CD4-positive, alpha-beta memory T cell (primary cell): ENCODE measurements at regions of chr14 and their contacts with region 1.

Region 1: GRCh38 chr14:38089123-38089522 is 118.6 kb upstream of the SSTR1 start:
- DNase-seq: peak in 1 of 5 donors; percentile 13
- H3K4me3 ChIP-seq: peak overlapping the region; percentile 2 to 30
- H3K4me3 Mint-ChIP-seq: peak overlapping the region; percentile 73 to 90 (median 84)
- H3K27ac ChIP-seq: peak overlapping the region; percentile 41
- H3K27ac Mint-ChIP-seq: peak overlapping the region; percentile 73 to 92 (median 87)
- H3K4me1 ChIP-seq: peaks cover 29% of the 10 kb centered on the region
- H3K4me1 Mint-ChIP-seq: peaks cover 20 to 32% (median 21%) of the 10 kb centered on the region in 4 donors
- H3K27me3 ChIP-seq: no peaks in the 10 kb centered on the region
- H3K27me3 Mint-ChIP-seq: no peaks in the 10 kb centered on the region

Region 2: DNA sequence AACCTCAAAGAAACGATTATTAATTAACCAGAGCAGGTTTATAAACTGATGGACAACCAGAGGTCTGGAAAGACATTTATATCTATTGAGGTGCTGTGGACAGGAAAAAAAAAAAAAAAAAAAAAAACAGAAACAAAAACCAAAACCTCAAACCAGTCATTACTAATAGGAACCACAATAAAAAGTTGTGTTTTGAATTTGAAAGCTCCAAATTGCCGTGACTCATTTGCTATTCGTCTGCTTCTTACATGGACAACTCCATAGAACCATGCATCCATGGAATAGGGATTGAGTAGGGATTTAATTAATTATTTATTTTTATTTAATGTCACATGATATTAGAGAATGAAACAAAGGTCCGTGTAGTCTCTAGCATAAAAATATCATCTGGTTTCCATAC is 15.5 kb before region 1 on chr14:
- CTCF ChIA-PET with region 1: no interaction called
- POLR2A ChIA-PET with region 1: no interaction called
- intact Hi-C with region 1: loop called (anchors 2 kb)
- DNase-seq: peak in 4 of 5 donors; percentile 30 to 48 (median 34)
- H3K4me3 ChIP-seq: peak overlapping the region in 1 of 2 donors; percentile 35
- H3K4me3 Mint-ChIP-seq: peak overlapping the region in 6 of 8 donors; percentile 35 to 81 (median 73)
- H3K27ac ChIP-seq: no peak overlapping the region
- H3K27ac Mint-ChIP-seq: peak overlapping the region; percentile 89 to 95 (median 93)
- H3K4me1 ChIP-seq: peaks cover 86% of the 10 kb centered on the region
- H3K4me1 Mint-ChIP-seq: peaks cover 57 to 89% (median 70%) of the 10 kb centered on the region in 4 donors
- H3K27me3 ChIP-seq: no peaks in the 10 kb centered on the region
- H3K27me3 Mint-ChIP-seq: no peaks in the 10 kb centered on the region

Region 3: GRCh38 chr14:38121320-38122020 is 32.3 kb after region 1 on chr14:
- CTCF ChIA-PET with region 1: no interaction called
- POLR2A ChIA-PET with region 1: no interaction called
- intact Hi-C with region 1: loop called (anchors 5 kb)
- DNase-seq: no peak
- H3K4me3 ChIP-seq: no peak overlapping the region
- H3K4me3 Mint-ChIP-seq: peak overlapping the region in 6 of 8 donors; percentile 13 to 69 (median 32)
- H3K27ac ChIP-seq: no peak overlapping the region
- H3K27ac Mint-ChIP-seq: peak overlapping the region in 4 of 7 donors; percentile 39 to 59 (median 52)
- H3K4me1 ChIP-seq: peaks cover 10% of the 10 kb centered on the region
- H3K4me1 Mint-ChIP-seq: peaks cover 22 to 35% (median 30%) of the 10 kb centered on the region in 4 donors
- H3K27me3 ChIP-seq: no peaks in the 10 kb centered on the region
- H3K27me3 Mint-ChIP-seq: no peaks in the 10 kb centered on the region

Region 4: DNA sequence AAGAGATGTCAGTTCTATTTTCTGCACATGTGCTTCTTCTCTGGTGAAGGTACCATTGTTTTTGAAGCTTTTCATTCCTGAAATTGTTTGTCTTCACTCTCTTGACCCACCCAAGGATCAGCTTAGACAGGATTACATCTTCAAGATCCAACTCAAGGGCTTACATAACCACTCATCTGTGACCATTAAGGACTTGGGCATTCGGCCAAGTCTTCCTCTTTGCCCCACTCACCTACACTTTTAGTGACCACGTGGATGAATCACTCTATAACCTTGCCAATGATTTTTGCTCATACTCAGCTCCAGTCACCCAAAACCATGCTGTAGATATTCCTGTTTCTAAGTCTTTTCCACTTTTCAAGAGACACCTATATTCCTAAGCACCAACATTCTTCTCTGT is 82.1 kb after region 1 on chr14:
- CTCF ChIA-PET with region 1: no interaction called
- POLR2A ChIA-PET with region 1: no interaction called
- intact Hi-C with region 1: no loop called
- DNase-seq: no peak
- H3K4me3 ChIP-seq: no peak overlapping the region
- H3K4me3 Mint-ChIP-seq: no peak overlapping the region
- H3K27ac ChIP-seq: no peak overlapping the region
- H3K27ac Mint-ChIP-seq: no peak overlapping the region
- H3K4me1 ChIP-seq: no peaks in the 10 kb centered on the region
- H3K4me1 Mint-ChIP-seq: no peaks in the 10 kb centered on the region
- H3K27me3 ChIP-seq: no peaks in the 10 kb centered on the region
- H3K27me3 Mint-ChIP-seq: peaks cover 3 to 5% of the 10 kb centered on the region in 2 donors